ENCODE measurements at regions of chr1 and their contacts with region 1.

Region 1: DNA sequence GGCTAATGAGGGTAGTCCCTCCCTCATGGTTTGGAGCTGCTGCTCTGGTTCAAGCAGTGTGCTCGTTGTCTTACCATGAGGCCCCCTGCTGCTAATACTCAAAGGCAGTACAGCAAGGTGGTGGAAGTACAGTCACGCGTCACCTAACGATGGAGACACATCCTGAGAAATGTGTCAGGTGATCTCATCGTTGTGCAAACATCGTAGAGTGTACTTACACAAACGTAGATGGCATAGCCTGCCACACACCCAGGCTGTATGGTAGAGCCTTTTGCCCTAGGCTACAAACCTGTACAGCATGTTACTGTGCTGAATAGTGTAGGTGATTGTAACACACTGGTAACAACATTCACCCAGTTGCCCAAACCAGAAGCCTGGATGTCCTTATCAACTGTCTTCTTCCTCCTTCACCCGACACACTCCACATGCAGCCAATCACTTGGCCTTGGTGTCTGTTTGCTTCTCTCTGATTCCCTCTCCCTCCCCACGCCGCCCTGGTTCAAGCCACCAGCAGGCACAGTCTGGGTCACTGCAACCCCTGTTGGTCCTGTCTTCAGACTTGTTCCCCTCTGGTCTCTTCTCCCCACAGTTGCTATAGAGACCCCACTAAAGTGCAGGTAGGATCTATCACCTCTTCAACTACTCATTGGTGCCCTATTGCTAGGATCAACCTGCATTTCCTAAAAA is 6.0 kb upstream of the KCNA2 start:
- DNase-seq: no peak
- ATAC-seq: no peak
- H3K4me3 ChIP-seq: no peak overlapping the region
- H3K27ac ChIP-seq: no peak overlapping the region
- H3K4me1 ChIP-seq: no peaks in the 10 kb centered on the region
- H3K27me3 ChIP-seq: peaks cover 13 to 30% (median 23%) of the 10 kb centered on the region in 3 donors
- CTCF ChIP-seq: no peak
- POLR2A ChIP-seq: no peak

Region 2: GRCh38 chr1:110356405-110356804 is 255.8 kb before region 1 on chr1:
- in situ Hi-C with region 1: no loop called
- intact Hi-C with region 1: no loop called
- DNase-seq: no peak
- ATAC-seq: no peak
- H3K4me3 ChIP-seq: no peak overlapping the region
- H3K27ac ChIP-seq: no peak overlapping the region
- H3K4me1 ChIP-seq: peaks cover 2 to 24% of the 10 kb centered on the region in 2 donors
- H3K27me3 ChIP-seq: no peaks in the 10 kb centered on the region
- CTCF ChIP-seq: no peak
- POLR2A ChIP-seq: no peak

Region 3: DNA sequence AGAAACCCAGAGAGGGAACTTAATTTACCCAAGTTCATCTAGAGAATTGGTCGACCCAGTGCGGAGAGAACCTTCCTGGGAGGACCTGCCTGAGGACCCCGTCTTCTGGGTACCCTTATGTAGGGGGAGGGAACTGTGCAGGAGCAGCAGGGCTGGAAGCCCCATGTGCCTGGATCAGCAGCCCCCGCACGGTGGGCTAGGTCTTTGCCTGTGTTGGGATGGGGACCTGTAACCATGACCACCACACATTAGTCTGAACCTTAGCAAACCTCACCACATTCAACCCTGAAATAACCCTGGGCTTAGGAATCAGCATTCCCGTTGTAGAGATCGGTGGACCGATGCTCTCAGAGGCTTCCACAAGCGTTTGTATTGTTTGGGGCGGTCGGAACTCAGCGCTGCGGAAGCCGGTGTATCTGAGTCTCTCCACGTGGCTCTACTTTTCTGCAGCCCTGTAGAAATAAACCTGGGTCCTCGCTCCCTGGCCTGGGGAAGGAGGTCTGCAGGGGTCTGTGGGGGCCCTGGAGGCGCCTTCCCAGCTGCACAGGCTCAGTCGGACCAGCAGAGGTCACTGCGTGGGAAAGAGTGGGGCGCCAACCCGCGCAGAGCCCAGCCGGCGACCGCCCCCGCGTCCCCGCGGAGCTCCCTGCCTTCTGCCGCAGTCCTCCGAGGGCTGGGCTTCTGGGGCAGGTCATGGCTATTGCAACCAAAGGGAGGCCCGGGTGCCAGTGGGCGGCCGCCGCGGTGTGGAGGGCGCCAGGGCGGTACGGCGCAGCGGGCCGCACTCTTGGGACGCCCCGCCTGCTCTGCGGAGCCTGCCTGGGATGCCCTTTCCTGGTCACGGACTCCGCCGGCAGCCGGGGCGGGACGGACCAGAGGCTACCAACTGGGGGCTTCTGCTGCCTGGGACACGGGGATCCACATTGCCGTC is 57.1 kb before region 1 on chr1:
- in situ Hi-C with region 1: loop called in 2 of 4 experiments (anchors 5 to 10 kb)
- intact Hi-C with region 1: loop called (anchors 1 kb)
- DNase-seq: no peak
- ATAC-seq: peak; percentile 56 to 67
- H3K4me3 ChIP-seq: peak overlapping the region; percentile 39 to 56 (median 48)
- H3K27ac ChIP-seq: peak overlapping the region in 1 of 4 donors; percentile 23
- H3K4me1 ChIP-seq: no peaks in the 10 kb centered on the region
- H3K27me3 ChIP-seq: peaks cover 5 to 13% (median 10%) of the 10 kb centered on the region in 3 donors
- CTCF ChIP-seq: peak; percentile 35 to 73 (median 66)
- POLR2A ChIP-seq: no peak

Measured in gastrocnemius medialis (tissue), 4 donors.